Activated naive CD4-positive, alpha-beta T cell treated with anti-CD3 and anti-CD28 coated beads, Interleukin-2, amount 10 ng/mL, durations not matched to agents 7 days and 5 days (primary cell): ENCODE measurements at regions of chr2 and their contacts with region 1.

Region 1: GRCh38 chr2:203740780-203741281 is 34.4 kb downstream of the CD28 start:
- DNase-seq: peak; percentile 58
- H3K4me3 Mint-ChIP-seq: peak overlapping the region; percentile 51
- H3K27ac Mint-ChIP-seq: peak overlapping the region; percentile 97
- H3K4me1 Mint-ChIP-seq: peaks cover 83% of the 10 kb centered on the region
- H3K27me3 Mint-ChIP-seq: no peaks in the 10 kb centered on the region

Region 2: DNA sequence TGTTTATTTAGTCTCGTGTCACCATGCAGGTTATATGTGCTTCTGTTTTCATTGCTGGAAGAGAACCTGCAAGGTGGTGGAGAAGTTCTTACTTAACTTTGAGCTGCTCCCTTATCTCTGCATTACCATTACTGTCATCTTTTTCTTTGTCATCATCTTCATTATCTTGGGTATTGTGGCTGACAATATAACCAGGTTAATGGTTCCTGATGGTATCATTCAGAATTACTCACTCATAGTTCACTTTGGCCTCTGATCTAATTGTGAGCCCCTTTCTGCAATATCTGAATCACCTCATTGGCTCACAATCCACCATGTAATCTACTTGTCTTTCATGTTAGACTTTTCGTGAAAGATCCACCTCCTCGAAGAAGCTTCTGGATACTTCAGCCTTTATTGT is 29.4 kb before region 1 on chr2:
- CTCF ChIA-PET with region 1: interaction called, 15 read pairs
- DNase-seq: no peak
- H3K4me3 Mint-ChIP-seq: peak overlapping the region; percentile 86
- H3K27ac Mint-ChIP-seq: peak overlapping the region; percentile 99
- H3K4me1 Mint-ChIP-seq: peaks cover 64% of the 10 kb centered on the region
- H3K27me3 Mint-ChIP-seq: no peaks in the 10 kb centered on the region

Region 3: GRCh38 chr2:203756161-203756560 is 15.3 kb after region 1 on chr2:
- CTCF ChIA-PET with region 1: no interaction called
- DNase-seq: no peak
- H3K4me3 Mint-ChIP-seq: no peak overlapping the region
- H3K27ac Mint-ChIP-seq: no peak overlapping the region
- H3K4me1 Mint-ChIP-seq: peaks cover 15% of the 10 kb centered on the region
- H3K27me3 Mint-ChIP-seq: no peaks in the 10 kb centered on the region